Prostate gland (tissue), 2 donors: ENCODE measurements at regions of chr16 and their contacts with region 1.

Region 1: GRCh38 chr16:85821441-85822135 is 22.1 kb downstream of the COX4I1 start:
- DNase-seq: peak; percentile 55
- H3K4me3 ChIP-seq: no peak overlapping the region
- H3K27ac ChIP-seq: no peak overlapping the region
- H3K4me1 ChIP-seq: no peaks in the 10 kb centered on the region
- H3K27me3 ChIP-seq: peaks cover 5% of the 10 kb centered on the region
- CTCF ChIP-seq: peak; percentile 91 to 97 (median 97)
- POLR2A ChIP-seq: no peak

Region 2: DNA sequence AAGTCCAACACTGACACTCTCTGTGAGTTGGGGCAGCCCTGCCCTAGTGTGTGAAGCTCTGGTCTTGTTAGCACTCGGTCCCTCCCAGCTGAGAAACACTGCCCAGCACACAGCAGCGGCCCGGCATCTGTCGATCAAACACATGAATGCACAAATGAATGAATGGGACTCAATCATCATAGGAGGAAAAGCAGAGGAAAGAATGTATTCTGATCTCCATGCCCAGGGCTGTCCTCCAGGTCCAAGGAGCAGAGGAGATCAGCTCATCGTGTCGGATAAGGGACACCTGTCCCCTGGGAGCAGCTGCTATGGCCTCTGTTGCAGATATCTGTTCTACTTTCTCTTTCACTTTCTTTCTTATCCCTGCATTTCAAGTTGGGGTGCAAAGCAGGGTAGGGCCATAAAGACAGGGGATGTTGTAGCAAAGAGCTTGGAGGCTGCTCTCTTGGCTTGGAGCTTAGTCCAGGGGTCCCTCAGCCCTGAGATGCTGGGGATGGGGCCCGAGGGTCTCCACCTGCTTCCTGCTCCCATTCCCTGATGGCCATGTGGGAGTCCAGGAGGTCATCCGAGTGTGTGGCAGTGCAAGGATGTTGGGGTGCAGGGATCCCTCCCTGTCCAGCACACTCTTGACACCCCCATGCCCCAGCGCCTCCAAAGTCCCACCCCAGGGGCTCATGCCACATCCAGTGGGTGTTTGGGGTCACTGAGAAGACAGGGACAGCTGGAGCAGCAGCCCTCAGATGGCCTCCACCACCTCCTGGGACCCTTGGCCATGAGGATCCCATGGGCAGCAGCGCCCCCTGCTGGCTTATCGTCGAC is 165.6 kb after region 1 on chr16:
- intact Hi-C with region 1: loop called (anchors 10 kb)
- DNase-seq: no peak
- H3K4me3 ChIP-seq: no peak overlapping the region
- H3K27ac ChIP-seq: no peak overlapping the region
- H3K4me1 ChIP-seq: no peaks in the 10 kb centered on the region
- H3K27me3 ChIP-seq: no peaks in the 10 kb centered on the region
- CTCF ChIP-seq: peak in 3 of 4 experiments; percentile 27 to 38 (median 34)
- POLR2A ChIP-seq: no peak

Region 3: DNA sequence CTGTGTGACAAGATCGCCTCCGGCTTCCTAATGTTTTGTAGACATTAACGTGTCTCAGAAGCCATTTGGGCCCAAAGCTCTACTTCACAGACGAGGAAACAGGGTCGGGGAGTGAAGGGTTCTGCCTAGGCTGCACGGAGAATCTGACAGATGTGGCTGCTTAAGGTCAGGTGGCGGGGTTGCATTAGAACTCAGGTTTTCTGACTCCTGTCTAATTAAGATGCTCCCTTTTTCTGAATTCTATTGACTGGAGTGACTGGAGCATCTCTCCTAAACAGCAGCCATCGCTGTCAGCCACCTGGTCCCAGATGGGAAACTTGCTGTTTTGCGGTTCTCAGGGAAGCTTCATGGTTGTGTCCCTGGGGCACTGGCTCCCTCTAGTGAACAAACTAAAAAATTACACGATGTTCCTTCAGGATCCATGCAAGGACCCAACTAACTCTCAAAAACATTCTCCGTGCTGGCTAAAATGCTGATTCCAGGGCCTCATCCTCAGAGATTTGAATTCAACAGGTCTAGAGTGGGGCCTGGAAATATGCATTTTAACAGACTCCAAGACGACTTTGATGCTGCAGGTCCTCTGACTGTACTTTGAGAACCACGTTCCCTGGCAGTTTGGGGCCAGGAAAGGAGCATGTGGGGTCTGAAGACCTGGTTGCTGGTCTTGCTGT is 194.7 kb after region 1 on chr16:
- intact Hi-C with region 1: loop called (anchors 2 kb)
- DNase-seq: peak; percentile 20
- H3K4me3 ChIP-seq: no peak overlapping the region
- H3K27ac ChIP-seq: no peak overlapping the region
- H3K4me1 ChIP-seq: no peaks in the 10 kb centered on the region
- H3K27me3 ChIP-seq: no peaks in the 10 kb centered on the region
- CTCF ChIP-seq: peak; percentile 17 to 73 (median 71)
- POLR2A ChIP-seq: no peak

Region 4: DNA sequence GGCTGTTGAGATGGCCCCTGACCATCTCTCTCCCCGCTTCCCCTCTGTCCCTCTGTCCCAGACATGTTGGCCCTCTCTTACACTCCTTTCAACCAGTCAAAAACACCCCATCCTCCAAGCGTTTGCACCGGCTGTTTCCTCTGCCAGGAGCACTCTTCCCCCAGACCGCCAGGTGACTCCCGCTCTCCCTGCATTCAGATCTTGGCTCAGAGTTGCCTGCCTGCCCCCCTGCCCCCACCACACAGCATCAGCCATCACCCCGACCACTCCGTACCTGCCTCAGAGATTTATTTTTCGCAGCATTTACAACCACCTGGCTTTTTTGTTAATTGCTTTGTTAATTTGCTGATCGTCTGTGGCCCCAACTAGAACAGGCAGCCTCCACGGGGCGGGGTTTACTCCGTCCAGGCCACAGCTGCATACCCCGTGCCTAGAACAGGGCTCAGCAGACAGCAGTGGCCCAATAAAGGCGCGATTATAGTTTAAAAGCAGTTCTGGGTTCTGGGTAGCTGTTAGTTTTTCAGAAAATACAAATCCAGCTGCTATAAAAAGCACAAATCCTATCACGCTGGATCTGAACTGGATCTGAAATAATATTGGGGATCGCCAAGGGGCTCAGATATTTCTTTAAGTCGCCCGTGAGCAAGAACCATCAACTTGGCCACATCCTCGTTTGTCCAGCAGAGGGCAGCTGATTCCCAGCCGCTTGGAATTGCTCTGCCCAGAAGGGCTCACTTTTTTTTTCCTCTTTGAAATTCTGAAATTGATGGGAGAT is 250.9 kb after region 1 on chr16:
- intact Hi-C with region 1: loop called (anchors 5 kb)
- DNase-seq: peak; percentile 53
- H3K4me3 ChIP-seq: no peak overlapping the region
- H3K27ac ChIP-seq: no peak overlapping the region
- H3K4me1 ChIP-seq: no peaks in the 10 kb centered on the region
- H3K27me3 ChIP-seq: no peaks in the 10 kb centered on the region
- CTCF ChIP-seq: peak; percentile 47 to 75 (median 65)
- POLR2A ChIP-seq: no peak